Activated CD4-positive, alpha-beta memory T cell treated with anti-CD3 and anti-CD28 coated beads for 36 hours (primary cell): ENCODE measurements at regions of chr14 and their contacts with region 1.

Region 1: DNA sequence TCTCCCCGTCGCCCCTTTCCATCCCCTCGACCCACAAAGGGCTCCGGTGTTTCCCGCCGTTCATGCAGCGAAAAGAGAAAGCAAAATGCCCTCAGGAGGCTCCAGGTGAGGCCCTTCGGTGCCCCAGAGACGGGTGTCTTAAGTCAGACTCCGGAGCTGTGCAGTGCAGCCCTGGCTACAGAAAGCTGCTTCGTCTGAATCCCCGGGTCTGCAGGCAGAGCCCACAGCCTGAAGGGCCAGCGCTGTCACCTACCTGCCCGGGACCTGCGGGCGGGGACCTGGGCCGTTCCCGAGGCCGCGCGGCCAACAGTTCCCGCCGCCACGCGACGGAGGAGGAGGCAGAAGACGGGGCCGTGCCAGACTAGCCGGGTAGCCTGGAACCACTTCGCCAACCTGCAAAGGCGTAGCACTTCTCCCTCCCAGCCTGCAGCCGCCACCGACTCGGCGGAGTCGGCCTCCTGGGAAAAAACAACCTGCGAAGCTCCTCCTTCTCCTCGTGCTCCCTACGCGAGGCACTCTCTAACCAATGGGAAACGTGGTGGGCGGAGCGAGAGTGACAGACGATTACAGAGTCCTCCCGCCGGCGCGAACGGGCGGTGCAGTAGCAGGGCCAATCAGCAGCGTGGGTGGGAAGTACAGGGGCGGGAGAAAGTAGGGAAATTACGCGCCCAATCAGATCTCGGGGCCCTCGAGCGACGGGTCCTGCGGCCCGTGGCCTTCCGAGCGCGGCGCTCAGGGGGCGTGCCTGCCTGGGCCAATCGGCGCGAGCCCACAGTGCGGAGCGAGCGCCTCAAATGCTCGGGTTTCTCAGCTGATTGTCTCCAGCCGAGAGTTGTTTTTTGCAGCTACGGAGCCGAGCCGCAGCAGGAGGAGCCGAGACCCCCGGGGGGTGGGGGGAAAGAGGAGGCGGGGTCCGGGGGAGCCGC is at the starts of genes GPR137C and TXNDC16:
- DNase-seq: peak; percentile 100
- H3K4me3 Mint-ChIP-seq: peak within 1 kb of the TSS; percentile 92
- H3K27ac Mint-ChIP-seq: peak within 1 kb of the TSS; percentile 55
- H3K4me1 Mint-ChIP-seq: peaks cover 20% of the 10 kb centered on the region
- H3K27me3 Mint-ChIP-seq: no peaks in the 10 kb centered on the region
- total RNA-seq, gene GPR137C: 0.12 to 0.19 TPM
- total RNA-seq, gene TXNDC16: 4.3 to 4.8 TPM

Region 2: GRCh38 chr14:51860164-51860824 is 692.0 kb before region 1 on chr14 and contains the start of gene GNG2:
- CTCF ChIA-PET with region 1: no interaction called
- POLR2A ChIA-PET with region 1: no interaction called
- intact Hi-C with region 1: loop called (anchors 10 kb)
- DNase-seq: peak; percentile 91
- H3K4me3 Mint-ChIP-seq: peak within 1 kb of the TSS; percentile 96
- H3K27ac Mint-ChIP-seq: peak within 1 kb of the TSS; percentile 96
- H3K4me1 Mint-ChIP-seq: peaks cover 52% of the 10 kb centered on the region
- H3K27me3 Mint-ChIP-seq: no peaks in the 10 kb centered on the region
- total RNA-seq, gene GNG2: 146 TPM

Region 3: GRCh38 chr14:52154992-52155650 is 397.2 kb before region 1 on chr14:
- CTCF ChIA-PET with region 1: no interaction called
- POLR2A ChIA-PET with region 1: no interaction called
- intact Hi-C with region 1: no loop called
- DNase-seq: peak; percentile 25
- H3K4me3 Mint-ChIP-seq: no peak overlapping the region
- H3K27ac Mint-ChIP-seq: no peak overlapping the region
- H3K4me1 Mint-ChIP-seq: peaks cover 17% of the 10 kb centered on the region
- H3K27me3 Mint-ChIP-seq: no peaks in the 10 kb centered on the region

Region 4: DNA sequence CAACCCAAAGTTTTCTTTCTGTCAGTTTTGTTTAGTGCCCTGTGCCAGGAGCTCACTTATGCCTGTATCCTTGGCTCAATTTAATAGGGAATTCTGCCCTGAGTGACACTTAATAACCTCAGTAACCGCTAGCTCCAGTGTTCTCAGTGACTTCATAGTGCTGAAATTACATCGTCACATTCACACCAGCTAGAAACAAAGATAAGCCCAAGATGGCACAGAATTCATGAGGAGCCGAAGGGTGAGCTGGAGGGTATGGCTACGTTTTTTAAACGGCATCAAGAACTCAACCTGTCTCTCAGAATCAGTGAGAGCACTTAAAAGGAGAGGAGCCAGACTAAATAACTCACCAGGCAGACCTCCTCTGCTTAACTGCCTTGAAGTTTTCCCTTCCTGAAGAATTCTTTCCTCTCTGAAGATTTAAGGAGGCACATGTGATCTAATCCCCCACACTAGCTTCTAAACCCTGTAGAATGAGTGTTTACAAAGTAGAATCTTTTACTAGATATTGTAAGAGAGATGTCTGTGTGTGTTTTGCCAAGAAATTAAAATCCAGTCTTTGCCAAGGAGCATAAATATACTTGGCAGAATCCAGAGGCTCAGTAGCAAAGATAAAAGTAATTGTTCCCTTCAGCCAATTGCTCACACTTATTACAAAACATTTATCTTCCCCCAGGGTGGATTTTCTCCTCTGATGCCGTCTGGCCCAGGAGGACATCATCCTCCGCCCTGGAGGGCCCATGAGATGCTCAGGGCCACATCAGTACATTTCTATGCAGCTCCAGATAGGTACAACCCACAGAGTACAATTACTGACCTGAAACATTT is 200.9 kb before region 1 on chr14:
- CTCF ChIA-PET with region 1: no interaction called
- POLR2A ChIA-PET with region 1: no interaction called
- intact Hi-C with region 1: loop called (anchors 5 kb)
- DNase-seq: no peak
- H3K4me3 Mint-ChIP-seq: peak overlapping the region; percentile 42
- H3K27ac Mint-ChIP-seq: peak overlapping the region; percentile 84
- H3K4me1 Mint-ChIP-seq: peaks cover 66% of the 10 kb centered on the region
- H3K27me3 Mint-ChIP-seq: no peaks in the 10 kb centered on the region

Region 5: DNA sequence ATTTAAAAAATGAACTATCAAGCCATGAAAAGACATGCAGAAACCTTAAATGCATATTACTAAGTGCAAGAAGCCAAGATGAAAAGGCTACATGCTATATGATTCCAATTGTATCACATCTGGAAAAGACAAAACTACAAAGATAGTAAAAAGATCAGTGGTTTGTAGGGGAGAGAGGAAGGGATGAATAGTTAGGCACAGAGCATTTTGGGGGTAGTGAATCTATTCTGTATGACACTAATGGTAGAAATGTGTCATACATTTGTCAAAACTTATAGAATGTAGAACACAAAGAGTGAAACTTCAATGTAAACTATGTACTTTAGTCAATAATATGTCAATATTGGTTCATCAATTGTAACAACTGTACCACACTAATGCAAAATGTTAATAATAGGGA is 20.8 kb before region 1 on chr14:
- CTCF ChIA-PET with region 1: no interaction called
- POLR2A ChIA-PET with region 1: interaction called, 4 read pairs
- intact Hi-C with region 1: loop called (anchors 1 kb)
- DNase-seq: no peak
- H3K4me3 Mint-ChIP-seq: no peak overlapping the region
- H3K27ac Mint-ChIP-seq: no peak overlapping the region
- H3K4me1 Mint-ChIP-seq: no peaks in the 10 kb centered on the region
- H3K27me3 Mint-ChIP-seq: no peaks in the 10 kb centered on the region

Region 6: DNA sequence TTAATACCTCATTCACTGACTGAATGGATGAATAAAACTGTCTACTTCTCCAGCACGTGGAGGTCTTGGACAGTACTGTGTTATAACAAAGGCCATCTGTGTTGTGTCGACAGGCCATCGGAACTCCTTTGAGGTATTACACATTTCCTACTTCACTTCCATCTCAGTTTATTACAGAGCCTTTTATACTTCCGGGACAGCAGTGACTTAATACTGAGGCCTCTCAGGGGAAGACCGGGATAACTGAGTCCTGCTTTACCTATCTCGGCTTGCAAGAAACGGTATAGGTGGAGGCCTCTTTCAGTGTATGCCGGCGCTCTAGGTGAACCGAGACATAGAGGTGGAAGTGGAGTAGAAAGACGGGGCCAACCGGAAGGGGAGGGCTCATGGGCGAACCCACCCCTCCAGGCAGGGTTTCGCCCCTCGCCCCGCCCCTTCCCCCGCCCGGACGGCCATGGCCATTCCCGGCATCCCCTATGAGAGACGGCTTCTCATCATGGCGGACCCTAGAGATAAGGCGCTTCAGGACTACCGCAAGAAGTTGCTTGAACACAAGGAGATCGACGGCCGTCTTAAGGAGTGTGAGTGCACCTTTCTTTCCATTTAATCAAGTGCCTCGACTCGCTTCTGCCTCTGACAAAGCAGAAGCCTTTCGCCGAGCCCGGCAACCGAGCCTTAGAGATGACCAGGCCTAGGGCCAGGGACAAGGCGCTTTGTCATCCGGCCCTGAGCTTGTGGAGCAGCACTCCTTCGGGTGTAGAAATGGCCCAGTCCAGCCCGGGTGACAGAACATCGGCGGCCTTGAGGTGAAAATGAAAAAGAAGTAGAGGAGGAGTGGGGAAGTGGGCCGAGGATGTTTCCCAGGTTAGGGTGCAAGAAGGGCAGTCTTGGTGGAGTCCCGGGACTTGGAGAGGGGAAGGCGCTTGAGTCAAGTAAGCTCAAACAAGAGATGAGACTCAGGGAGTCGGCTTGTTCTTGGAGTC is 154.7 kb after region 1 on chr14 and contains the start of gene PSMC6:
- CTCF ChIA-PET with region 1: no interaction called
- POLR2A ChIA-PET with region 1: no interaction called
- intact Hi-C with region 1: loop called (anchors 1 kb)
- DNase-seq: peak; percentile 97
- H3K4me3 Mint-ChIP-seq: peak within 1 kb of the TSS; percentile 98
- H3K27ac Mint-ChIP-seq: peak within 1 kb of the TSS; percentile 95
- H3K4me1 Mint-ChIP-seq: peaks cover 41% of the 10 kb centered on the region
- H3K27me3 Mint-ChIP-seq: no peaks in the 10 kb centered on the region
- total RNA-seq, gene PSMC6: 109 to 110 TPM

Region 7: GRCh38 chr14:52791203-52792096 is 239.1 kb after region 1 on chr14 and contains the start of gene GNPNAT1:
- CTCF ChIA-PET with region 1: no interaction called
- POLR2A ChIA-PET with region 1: no interaction called
- intact Hi-C with region 1: loop called (anchors 1 kb)
- DNase-seq: peak; percentile 88
- H3K4me3 Mint-ChIP-seq: peak within 1 kb of the TSS; percentile 94
- H3K27ac Mint-ChIP-seq: peak within 1 kb of the TSS; percentile 54
- H3K4me1 Mint-ChIP-seq: peaks cover 41% of the 10 kb centered on the region
- H3K27me3 Mint-ChIP-seq: no peaks in the 10 kb centered on the region
- total RNA-seq, gene GNPNAT1: 30.4 to 31.4 TPM

Region 8: DNA sequence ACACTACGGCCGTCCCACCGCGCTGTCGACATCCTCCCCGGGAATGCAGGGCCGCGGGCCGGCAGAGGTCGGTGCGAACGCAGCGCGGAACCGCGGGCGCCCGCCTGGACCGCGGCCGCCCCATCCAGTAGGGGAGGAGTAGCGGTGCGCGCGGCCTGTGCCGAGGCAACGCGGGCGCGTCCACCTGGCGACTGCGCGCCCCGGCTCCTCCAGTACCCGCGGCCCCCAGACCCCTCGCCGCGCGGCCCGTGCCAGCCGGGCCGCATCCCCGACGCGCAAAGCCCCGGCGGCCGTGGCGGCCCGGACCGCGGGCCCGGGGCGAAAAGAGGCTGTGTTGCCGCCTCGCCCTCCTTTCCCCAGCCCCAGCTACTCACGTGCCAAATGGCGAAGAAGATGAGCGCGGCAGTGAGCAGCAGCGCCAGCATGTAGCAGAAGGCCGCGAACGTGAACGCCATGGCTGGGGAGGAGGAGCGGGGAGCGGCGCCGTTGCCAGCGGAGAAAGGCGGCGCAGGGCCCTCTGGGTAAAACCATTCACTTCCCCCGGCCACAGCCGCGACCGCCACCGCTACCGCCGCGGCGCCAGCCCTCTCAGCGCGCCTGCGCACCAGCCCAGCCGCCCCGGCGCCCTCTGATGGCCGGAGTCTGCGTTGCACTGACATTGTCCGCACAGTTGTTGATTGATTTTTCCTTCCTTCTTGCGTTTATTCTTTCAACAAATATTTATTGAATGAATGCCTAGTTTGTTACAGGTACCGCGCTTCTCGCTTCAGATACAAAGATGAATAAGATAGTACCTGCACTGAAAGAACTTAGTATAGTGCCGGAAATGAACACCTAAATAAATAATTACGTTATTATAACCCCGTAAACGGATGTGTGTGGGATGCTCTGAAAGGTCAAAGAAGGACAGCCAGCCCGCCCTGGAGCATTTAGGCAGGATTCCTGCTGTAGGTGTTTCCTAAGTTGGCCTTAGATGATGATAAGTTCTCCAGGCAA is 1888.8 kb after region 1 on chr14 and contains the start of gene CNIH1:
- CTCF ChIA-PET with region 1: no interaction called
- POLR2A ChIA-PET with region 1: no interaction called
- intact Hi-C with region 1: loop called (anchors 2 kb)
- DNase-seq: peak; percentile 95
- H3K4me3 Mint-ChIP-seq: peak within 1 kb of the TSS; percentile 88
- H3K27ac Mint-ChIP-seq: peak within 1 kb of the TSS; percentile 93
- H3K4me1 Mint-ChIP-seq: peaks cover 50% of the 10 kb centered on the region
- H3K27me3 Mint-ChIP-seq: no peaks in the 10 kb centered on the region
- total RNA-seq, gene CNIH1: 84.2 to 89.9 TPM